ENCODE measurements at regions of chr6 and their contacts with region 1.

Region 1: DNA sequence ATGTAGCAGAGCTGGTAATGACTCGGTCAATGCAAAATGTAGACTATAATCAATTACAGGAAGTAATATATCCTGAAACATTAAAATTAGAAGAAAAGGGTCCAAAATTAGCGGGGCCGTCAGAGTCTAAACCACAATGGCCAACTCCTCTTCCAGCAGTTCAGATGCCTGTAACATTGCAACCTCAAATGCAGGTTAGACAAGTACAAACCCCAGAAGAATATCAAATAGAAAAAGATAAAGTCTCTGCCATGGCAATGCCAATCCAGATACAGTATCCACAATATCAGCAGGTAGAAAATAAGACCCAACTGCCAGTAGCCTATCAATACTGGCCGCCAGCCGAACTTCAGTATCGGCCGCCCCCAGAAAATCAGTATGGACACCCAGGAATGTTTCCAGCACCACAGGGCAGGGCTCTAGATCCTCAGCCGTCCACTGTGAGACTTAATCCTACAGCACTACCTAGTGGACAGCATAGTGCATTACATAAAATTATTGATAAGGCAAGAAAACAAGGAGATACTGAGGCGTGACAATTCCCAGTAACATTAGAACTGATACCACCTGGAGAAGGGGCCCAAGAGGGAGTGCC is 158.4 kb downstream of the GPX5 start:
- DNase-seq: peak in 5 of 7 donors; percentile 11 to 35 (median 32)
- H3K4me3 ChIP-seq: no peak overlapping the region
- H3K27ac ChIP-seq: no peak overlapping the region
- H3K4me1 ChIP-seq: no peaks in the 10 kb centered on the region
- H3K27me3 ChIP-seq: peaks cover 37% of the 10 kb centered on the region
- CTCF ChIP-seq: peak; percentile 43 to 67 (median 58)
- POLR2A ChIP-seq: no peak

Region 2: GRCh38 chr6:28769626-28770402 is 85.8 kb after region 1 on chr6:
- intact Hi-C with region 1: no loop called
- DNase-seq: peak; percentile 5 to 69 (median 52)
- H3K4me3 ChIP-seq: no peak overlapping the region
- H3K27ac ChIP-seq: no peak overlapping the region
- H3K4me1 ChIP-seq: no peaks in the 10 kb centered on the region
- H3K27me3 ChIP-seq: peaks cover 92% of the 10 kb centered on the region
- CTCF ChIP-seq: no peak
- POLR2A ChIP-seq: no peak

Region 3: GRCh38 chr6:28838634-28839442 is 154.8 kb after region 1 on chr6:
- intact Hi-C with region 1: loop called in 1 of 2 experiments (anchors 5 kb)
- DNase-seq: peak; percentile 77 to 86 (median 85)
- H3K4me3 ChIP-seq: peak overlapping the region in 3 of 4 donors; percentile 50 to 59 (median 52)
- H3K27ac ChIP-seq: peak overlapping the region in 3 of 5 donors; percentile 59 to 76 (median 70)
- H3K4me1 ChIP-seq: peaks cover 0 to 12% of the 10 kb centered on the region in 2 donors
- H3K27me3 ChIP-seq: peaks cover 2% of the 10 kb centered on the region
- CTCF ChIP-seq: peak; percentile 27 to 59 (median 52)
- POLR2A ChIP-seq: no peak

Region 4: DNA sequence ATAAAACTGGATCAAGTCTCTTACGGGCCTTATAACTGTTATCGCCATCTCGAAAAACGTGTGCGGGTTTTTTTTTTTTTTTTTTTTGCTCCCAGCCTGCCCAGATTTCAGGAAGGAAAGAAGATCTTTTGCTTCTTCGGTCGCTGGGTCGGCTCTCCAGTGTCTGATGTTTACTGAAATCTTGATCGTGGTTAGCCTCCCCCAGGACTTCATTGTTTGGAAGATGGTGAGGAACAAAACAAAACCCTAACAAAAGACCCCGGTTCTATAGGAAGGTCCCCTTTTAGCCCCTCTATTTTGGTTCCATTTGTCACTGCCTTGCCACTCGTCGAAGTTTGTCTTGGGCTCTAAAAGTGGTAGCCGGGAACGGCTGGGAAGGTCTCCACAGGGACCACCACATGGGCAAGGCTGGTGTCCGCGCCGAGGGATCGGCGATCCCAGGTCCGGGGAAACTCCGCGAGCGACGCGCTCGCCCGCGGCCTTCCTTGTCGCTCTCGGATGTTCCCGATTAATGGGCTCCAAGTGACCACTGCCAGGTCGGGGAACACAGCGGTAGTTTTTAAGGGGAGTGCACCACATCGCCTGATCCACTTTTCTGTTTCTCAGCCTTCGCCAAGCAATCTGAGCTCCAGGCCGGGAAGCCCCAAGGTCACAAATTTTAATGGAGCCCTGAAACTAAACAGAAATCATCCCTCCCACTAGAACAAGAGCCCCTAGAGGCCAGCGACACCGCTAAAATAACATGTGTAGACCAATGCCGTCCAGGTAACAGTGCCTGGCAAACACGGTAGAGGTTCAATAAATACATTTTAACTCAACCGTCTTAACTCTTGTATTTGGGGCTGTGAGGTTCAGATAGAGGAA is 212.7 kb after region 1 on chr6:
- intact Hi-C with region 1: no loop called
- DNase-seq: peak; percentile 59 to 84 (median 76)
- H3K4me3 ChIP-seq: peak overlapping the region in 3 of 4 donors; percentile 62 to 88 (median 79)
- H3K27ac ChIP-seq: peak overlapping the region; percentile 89 to 99 (median 96)
- H3K4me1 ChIP-seq: peaks cover 8 to 9% of the 10 kb centered on the region in 2 donors
- H3K27me3 ChIP-seq: no peaks in the 10 kb centered on the region
- CTCF ChIP-seq: peak in 5 of 6 experiments; percentile 29 to 48 (median 38)
- POLR2A ChIP-seq: peak in 1 of 2 donors; percentile 23

Region 5: GRCh38 chr6:29016559-29017427 is 332.8 kb after region 1 on chr6:
- intact Hi-C with region 1: loop called (anchors 2 to 10 kb)
- DNase-seq: peak; percentile 56 to 92 (median 80)
- H3K4me3 ChIP-seq: peak overlapping the region in 2 of 4 donors; percentile 17 to 52
- H3K27ac ChIP-seq: no peak overlapping the region
- H3K4me1 ChIP-seq: no peaks in the 10 kb centered on the region
- H3K27me3 ChIP-seq: peaks cover 19% of the 10 kb centered on the region
- CTCF ChIP-seq: peak; percentile 75 to 86 (median 80)
- POLR2A ChIP-seq: no peak

Region 6: GRCh38 chr6:29589423-29590048 is 905.5 kb after region 1 on chr6:
- intact Hi-C with region 1: loop called in 1 of 2 experiments (anchors 10 kb)
- DNase-seq: peak; percentile 31 to 77 (median 47)
- H3K4me3 ChIP-seq: no peak overlapping the region
- H3K27ac ChIP-seq: no peak overlapping the region
- H3K4me1 ChIP-seq: no peaks in the 10 kb centered on the region
- H3K27me3 ChIP-seq: no peaks in the 10 kb centered on the region
- CTCF ChIP-seq: peak; percentile 90 to 96 (median 94)
- POLR2A ChIP-seq: no peak

Measured in adrenal gland (tissue), 19 donors.